Activated CD4-positive, alpha-beta T cell treated with anti-CD3 and anti-CD28 coated beads, Interleukin-2, amount 10 ng/mL, durations not matched to agents 7 days and 5 days (primary cell): ENCODE measurements at regions of chr2 and their contacts with region 1.

Region 1: DNA sequence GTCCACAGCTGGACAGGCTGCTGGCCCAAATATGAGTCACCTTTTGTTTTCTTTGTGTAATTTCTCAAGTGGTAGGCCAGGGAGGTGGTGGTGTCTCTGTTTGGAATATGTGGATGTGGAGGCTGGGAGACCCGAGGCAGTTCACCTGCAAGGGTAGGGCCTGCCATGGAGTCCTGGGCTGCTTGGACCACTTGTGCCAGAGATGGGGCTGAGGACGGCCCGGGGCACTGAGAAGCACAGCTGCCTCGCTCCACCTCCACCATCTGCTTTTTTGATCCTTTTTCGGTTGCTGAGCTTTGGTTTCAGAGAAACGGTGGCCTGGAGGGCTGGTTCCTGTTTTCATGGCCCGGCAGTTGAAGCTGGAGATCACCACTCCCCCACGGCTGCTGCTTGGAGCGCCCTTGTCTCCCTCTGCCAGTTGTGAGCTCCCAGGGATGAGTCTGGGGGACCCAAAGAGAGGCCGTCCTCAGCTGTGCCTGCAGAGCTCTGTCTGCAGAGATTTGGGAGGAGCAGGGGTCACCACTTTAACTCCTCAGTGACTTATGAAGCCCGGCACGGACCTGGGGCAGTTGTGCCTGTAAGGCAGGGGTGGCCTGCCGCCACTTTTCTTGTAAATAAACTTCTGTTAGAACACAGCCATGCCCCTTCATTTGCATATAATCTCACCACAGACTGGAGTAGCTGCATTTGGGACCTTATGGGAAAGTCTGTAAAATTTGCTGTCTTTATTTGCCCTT is 67.6 kb upstream of the MCFD2 start:
- DNase-seq: no peak
- H3K4me3 Mint-ChIP-seq: no peak overlapping the region
- H3K27ac Mint-ChIP-seq: peak overlapping the region; percentile 95
- H3K4me1 Mint-ChIP-seq: peaks cover 89% of the 10 kb centered on the region
- H3K27me3 Mint-ChIP-seq: no peaks in the 10 kb centered on the region

Region 2: DNA sequence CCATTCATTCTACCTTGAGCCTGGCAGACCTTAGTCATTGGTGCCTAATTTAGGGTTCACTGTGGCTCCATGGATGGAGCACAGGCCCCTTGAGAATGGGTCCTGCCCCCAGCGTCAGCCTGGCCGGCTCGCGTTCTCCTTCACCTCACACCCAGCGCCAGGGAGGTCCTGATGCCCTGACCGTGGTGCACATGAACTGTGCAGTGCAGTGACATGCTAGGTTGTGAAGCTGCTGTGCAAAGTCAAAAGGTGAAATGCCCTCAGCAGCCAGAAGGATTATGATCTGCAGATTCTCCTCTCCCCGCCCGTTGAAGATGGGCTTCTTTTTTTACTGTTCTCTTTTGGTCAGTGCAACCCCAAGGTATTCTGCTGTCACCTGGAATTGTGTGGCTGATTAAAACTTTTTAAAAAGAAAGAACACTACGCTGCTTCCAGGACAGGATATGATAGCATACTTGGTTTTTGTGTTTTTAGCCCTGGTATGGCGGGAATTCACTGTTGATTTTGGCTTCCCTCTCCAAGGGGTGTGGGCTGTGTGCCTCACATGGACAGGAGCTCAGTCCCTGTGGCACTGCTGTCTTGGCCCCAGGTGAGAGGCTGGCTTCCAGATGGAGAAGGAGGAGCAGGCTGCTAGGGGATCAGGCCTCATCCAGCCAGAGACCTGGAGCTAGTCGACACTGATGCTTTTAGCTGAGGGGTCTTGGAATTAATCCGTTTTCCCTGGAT is 18.2 kb before region 1 on chr2:
- CTCF ChIA-PET with region 1: interaction called, 10 read pairs
- POLR2A ChIA-PET with region 1: interaction called, 4 read pairs
- DNase-seq: no peak
- H3K4me3 Mint-ChIP-seq: no peak overlapping the region
- H3K27ac Mint-ChIP-seq: no peak overlapping the region
- H3K4me1 Mint-ChIP-seq: peaks cover 21% of the 10 kb centered on the region
- H3K27me3 Mint-ChIP-seq: no peaks in the 10 kb centered on the region